Ovary (tissue), 10 donors: ENCODE measurements at regions of chr7 and their contacts with region 1.

Region 1: GRCh38 chr7:92854501-92855238 is 18.3 kb upstream of the CDK6 start:
- DNase-seq: no peak
- H3K4me3 ChIP-seq: no peak overlapping the region
- H3K27ac ChIP-seq: no peak overlapping the region
- H3K4me1 ChIP-seq: no peaks in the 10 kb centered on the region
- H3K27me3 ChIP-seq: no peaks in the 10 kb centered on the region
- CTCF ChIP-seq: no peak
- EP300 ChIP-seq: no peak
- POLR2A ChIP-seq: no peak

Region 2: GRCh38 chr7:91953618-91954017 is 901.1 kb before region 1 on chr7:
- intact Hi-C with region 1: loop called in 1 of 4 experiments (anchors 5 kb)
- DNase-seq: no peak
- H3K4me3 ChIP-seq: no peak overlapping the region
- H3K27ac ChIP-seq: no peak overlapping the region
- H3K4me1 ChIP-seq: peaks cover 3% of the 10 kb centered on the region
- H3K27me3 ChIP-seq: no peaks in the 10 kb centered on the region
- CTCF ChIP-seq: no peak
- EP300 ChIP-seq: no peak
- POLR2A ChIP-seq: no peak